BJ (cell line): ENCODE measurements at regions of chr10 and their contacts with region 1.

Region 1: GRCh38 chr10:104406715-104407650 is 53.4 kb downstream of the CFAP58 start:
- DNase-seq: peak; percentile 9
- H3K4me3 ChIP-seq: no peak overlapping the region
- H3K27me3 ChIP-seq: no peaks in the 10 kb centered on the region
- CTCF ChIP-seq: peak; percentile 72

Region 2: DNA sequence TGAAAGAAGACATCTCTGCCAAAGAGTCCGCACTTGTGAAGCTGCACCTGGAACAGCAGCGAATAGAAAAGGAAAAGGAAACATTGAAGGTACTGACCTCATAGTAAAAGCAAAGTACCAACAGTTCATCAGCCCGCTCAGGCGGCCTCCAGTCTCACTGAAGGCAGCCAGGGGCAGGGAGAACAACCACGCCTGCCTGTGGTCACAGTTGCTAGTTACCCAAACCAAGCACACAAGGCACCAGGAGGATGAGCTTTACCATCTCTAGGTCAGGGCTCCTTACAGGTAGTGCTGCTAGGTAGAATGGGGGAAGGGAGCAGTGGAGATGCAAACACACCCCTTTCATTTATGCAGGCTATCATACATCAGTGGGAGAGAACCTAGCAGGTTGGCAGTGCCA is 13.6 kb before region 1 on chr10:
- CTCF ChIA-PET with region 1: interaction called, 10 read pairs
- POLR2A ChIA-PET with region 1: no interaction called
- DNase-seq: no peak
- H3K4me3 ChIP-seq: no peak overlapping the region
- H3K27me3 ChIP-seq: peaks cover 2% of the 10 kb centered on the region; the same call in 1 of the 2 replicates
- CTCF ChIP-seq: no peak

Region 3: GRCh38 chr10:104424719-104425118 is 17.7 kb after region 1 on chr10:
- CTCF ChIA-PET with region 1: interaction called, 11 read pairs
- POLR2A ChIA-PET with region 1: no interaction called
- DNase-seq: no peak
- H3K4me3 ChIP-seq: no peak overlapping the region
- H3K27me3 ChIP-seq: no peaks in the 10 kb centered on the region
- CTCF ChIP-seq: no peak

Region 4: GRCh38 chr10:104580774-104581675 is 174.0 kb after region 1 on chr10:
- CTCF ChIA-PET with region 1: interaction called, 23 read pairs
- POLR2A ChIA-PET with region 1: no interaction called
- DNase-seq: no peak
- H3K4me3 ChIP-seq: peak overlapping the region; percentile 3; the same call in 1 of the 2 replicates
- H3K27me3 ChIP-seq: no peaks in the 10 kb centered on the region
- CTCF ChIP-seq: peak; percentile 92

Region 5: DNA sequence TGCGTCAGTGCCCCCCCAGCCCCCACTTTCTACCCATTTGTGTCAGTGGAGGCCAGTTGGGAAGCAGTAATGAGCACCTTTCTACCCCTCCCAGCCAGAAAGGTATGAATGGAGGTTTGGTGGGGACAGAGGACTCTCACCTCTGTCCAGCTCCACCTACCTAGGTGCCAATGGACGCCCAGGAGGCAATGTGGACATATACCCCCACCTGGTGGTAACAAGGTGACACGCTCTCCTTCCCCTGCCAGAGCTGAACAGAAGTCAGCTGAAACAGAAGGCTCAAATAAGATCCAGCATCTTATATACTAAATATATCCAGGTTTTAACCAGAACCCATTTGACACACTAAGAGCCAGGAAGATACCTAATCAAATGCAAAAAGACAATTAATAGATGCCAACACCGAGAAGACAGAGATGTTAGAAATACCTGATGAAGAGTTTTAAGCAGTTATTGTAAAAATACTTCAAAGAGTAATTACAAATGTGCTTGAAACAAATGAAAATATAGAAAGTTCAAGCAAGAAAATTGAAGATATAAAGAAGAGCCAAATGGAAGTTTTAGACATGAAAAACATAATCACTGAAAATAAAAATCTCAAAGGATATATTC is 215.7 kb after region 1 on chr10:
- CTCF ChIA-PET with region 1: interaction called, 19 read pairs
- POLR2A ChIA-PET with region 1: no interaction called
- DNase-seq: no peak
- H3K4me3 ChIP-seq: no peak overlapping the region
- H3K27me3 ChIP-seq: no peaks in the 10 kb centered on the region
- CTCF ChIP-seq: peak; percentile 48

Region 6: DNA sequence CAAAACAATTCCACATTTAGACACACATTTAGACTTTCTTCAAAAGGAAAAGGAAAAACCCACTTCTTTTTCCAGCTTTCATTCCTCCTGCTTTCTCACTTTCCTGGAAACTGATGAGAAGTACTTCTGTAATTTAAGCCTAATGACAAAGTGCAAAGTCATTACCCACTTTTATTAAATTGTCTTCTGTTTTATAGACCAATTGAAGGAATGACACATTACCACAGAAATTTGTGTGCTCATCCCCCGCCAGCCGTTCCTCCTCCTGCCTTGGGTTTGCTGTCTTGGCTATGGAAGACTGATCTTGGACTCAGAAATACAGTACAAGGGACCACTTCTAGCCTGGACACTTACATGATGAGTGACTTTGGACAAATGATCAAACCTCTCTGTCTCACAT is 951.9 kb after region 1 on chr10:
- CTCF ChIA-PET with region 1: no interaction called
- POLR2A ChIA-PET with region 1: no interaction called
- DNase-seq: no peak
- H3K4me3 ChIP-seq: no peak overlapping the region
- H3K27me3 ChIP-seq: no peaks in the 10 kb centered on the region
- CTCF ChIP-seq: no peak